ENCODE measurements at regions of chr11 and their contacts with region 1.

Region 1: GRCh38 chr11:9663699-9664275 is at the start of gene SWAP70:
- DNase-seq: peak; percentile 89
- H3K4me3 ChIP-seq: peak within 1 kb of the TSS; percentile 57 to 97 (median 63)
- H3K27ac ChIP-seq: peak within 1 kb of the TSS; percentile 93
- H3K4me1 ChIP-seq: peaks cover 18% of the 10 kb centered on the region
- H3K27me3 ChIP-seq: no peaks in the 10 kb centered on the region
- CTCF ChIP-seq: peak in 1 of 2 donors; percentile 41
- POLR2A ChIP-seq: peak; percentile 89
- total RNA-seq, gene SWAP70: 156 and 165 TPM in 2 replicates

Region 2: GRCh38 chr11:9626496-9627394 is 37.0 kb before region 1 on chr11:
- CTCF ChIA-PET with region 1: interaction called, 3 read pairs
- POLR2A ChIA-PET with region 1: no interaction called
- dilution Hi-C with region 1: no loop called
- intact Hi-C with region 1: loop called (anchors 1 kb)
- DNase-seq: peak; percentile 96
- H3K4me3 ChIP-seq: peak overlapping the region in 1 of 3 experiments; percentile 19
- H3K27ac ChIP-seq: peak overlapping the region; percentile 96
- H3K4me1 ChIP-seq: peaks cover 33% of the 10 kb centered on the region
- H3K27me3 ChIP-seq: no peaks in the 10 kb centered on the region
- CTCF ChIP-seq: no peak
- POLR2A ChIP-seq: peak; percentile 84

Region 3: DNA sequence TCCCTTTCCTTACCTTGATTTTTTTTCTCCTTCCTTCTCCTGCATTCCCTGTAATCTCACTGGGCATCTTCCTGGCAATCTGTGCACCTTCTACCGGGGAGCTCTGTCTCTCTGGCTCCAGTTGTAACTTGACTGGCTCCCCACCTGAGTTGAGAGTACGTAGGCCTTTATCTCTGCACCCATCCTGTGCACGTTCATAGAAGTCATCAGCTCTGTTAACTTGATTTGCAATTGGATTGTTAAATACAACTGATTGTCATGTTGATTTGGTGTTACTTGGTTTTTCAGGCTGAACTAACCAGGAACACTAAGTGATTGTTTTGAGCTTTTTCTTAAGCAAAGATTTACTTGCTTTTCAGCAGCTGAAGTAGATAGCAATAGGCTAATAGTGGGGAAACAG is 11.9 kb after region 1 on chr11:
- CTCF ChIA-PET with region 1: no interaction called
- POLR2A ChIA-PET with region 1: no interaction called
- dilution Hi-C with region 1: no loop called
- intact Hi-C with region 1: no loop called
- DNase-seq: no peak
- H3K4me3 ChIP-seq: no peak overlapping the region
- H3K27ac ChIP-seq: no peak overlapping the region
- H3K4me1 ChIP-seq: peaks cover 11% of the 10 kb centered on the region
- H3K27me3 ChIP-seq: no peaks in the 10 kb centered on the region
- CTCF ChIP-seq: no peak
- POLR2A ChIP-seq: no peak

Region 4: DNA sequence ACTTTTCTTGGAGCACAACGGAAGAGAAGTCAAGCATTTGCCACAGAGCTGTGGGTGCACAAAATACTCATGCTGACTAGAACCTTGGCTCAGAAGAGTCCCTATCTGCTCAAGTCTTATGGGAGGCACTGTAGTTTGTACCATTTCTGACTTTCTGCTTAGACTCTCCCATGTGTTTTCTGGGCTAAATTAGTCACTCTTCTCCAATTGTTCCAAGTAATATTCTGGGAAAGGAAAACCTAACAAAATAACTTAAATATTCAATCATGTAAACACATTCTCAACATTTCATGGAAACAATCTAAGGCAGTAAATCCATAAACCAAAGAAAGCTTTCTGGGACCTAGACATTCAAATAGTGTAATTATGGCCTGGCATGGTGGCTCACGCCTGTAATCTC is 220.8 kb after region 1 on chr11:
- CTCF ChIA-PET with region 1: no interaction called
- POLR2A ChIA-PET with region 1: no interaction called
- dilution Hi-C with region 1: no loop called
- intact Hi-C with region 1: no loop called
- DNase-seq: no peak
- H3K4me3 ChIP-seq: no peak overlapping the region
- H3K27ac ChIP-seq: no peak overlapping the region
- H3K4me1 ChIP-seq: no peaks in the 10 kb centered on the region
- H3K27me3 ChIP-seq: no peaks in the 10 kb centered on the region
- CTCF ChIP-seq: no peak
- POLR2A ChIP-seq: no peak